MCF 10A (cell line): ENCODE measurements at regions of chr2 and their contacts with region 1.

Region 1: DNA sequence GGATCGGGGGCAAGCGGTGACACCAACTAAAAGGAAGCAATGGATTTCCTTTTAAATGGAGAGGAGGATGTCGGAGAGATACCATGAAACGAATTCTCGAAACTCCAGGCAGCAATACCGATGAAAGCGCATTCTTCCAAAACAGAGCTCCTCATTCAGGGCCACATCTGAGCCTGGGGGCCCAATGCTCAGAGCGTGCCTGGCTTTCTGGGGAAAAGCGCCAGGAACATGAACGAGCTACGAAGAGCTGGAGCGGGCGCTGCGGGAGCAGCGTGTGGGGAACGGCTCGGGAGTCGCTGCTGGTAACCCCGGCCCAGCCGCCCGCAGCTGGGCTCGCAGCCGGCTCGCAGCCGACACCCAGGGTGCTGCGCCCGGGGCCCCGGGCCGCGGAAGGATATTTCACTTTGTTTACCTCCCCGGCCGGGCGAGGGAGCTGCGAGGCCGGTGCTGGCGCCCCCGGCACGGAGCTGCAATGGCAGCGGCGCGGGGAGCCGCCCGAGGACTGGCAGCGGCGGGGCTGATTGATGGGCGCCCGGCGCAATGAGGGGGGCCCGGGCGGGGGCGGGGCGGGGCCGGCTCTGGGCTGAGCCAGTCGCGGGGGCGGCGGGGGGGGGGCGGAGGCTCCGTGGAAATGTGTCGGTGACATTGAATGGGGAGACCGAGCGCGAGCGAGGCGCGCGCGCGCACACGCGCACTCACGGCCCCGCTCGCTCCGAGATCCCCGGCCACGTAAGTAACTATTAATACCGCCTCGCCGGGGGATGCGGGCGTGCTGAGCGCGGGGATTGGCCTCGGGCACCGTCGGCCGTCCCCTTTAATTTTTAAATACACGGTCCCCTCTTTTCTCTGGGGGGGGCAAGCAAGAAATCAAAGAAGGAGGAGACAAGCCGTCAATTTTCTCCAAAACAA is at the start of gene TRIB2:
- DNase-seq: peak; percentile 82
- H3K4me3 Mint-ChIP-seq: peak within 1 kb of the TSS; percentile 95
- H3K27ac Mint-ChIP-seq: peak within 1 kb of the TSS; percentile 85
- H3K4me1 Mint-ChIP-seq: peaks cover 47% of the 10 kb centered on the region
- H3K27me3 Mint-ChIP-seq: no peaks in the 10 kb centered on the region
- CTCF ChIP-seq: no peak
- total RNA-seq, gene TRIB2: 12.9 and 14.3 TPM in 2 replicates

Region 2: GRCh38 chr2:11955314-11955713 is 761.2 kb before region 1 on chr2:
- CTCF ChIA-PET with region 1: interaction called, 3 read pairs
- POLR2A ChIA-PET with region 1: interaction called, 3 read pairs
- intact Hi-C with region 1: loop called (anchors 5 kb)
- DNase-seq: peak; percentile 86
- H3K4me3 Mint-ChIP-seq: no peak overlapping the region
- H3K27ac Mint-ChIP-seq: peak overlapping the region; percentile 47
- H3K4me1 Mint-ChIP-seq: peaks cover 28% of the 10 kb centered on the region
- H3K27me3 Mint-ChIP-seq: no peaks in the 10 kb centered on the region
- CTCF ChIP-seq: no peak

Region 3: GRCh38 chr2:12169721-12170120 is 546.8 kb before region 1 on chr2:
- CTCF ChIA-PET with region 1: interaction called, 4 read pairs
- POLR2A ChIA-PET with region 1: no interaction called
- intact Hi-C with region 1: loop called (anchors 1 kb)
- DNase-seq: no peak
- H3K4me3 Mint-ChIP-seq: no peak overlapping the region
- H3K27ac Mint-ChIP-seq: no peak overlapping the region
- H3K4me1 Mint-ChIP-seq: no peaks in the 10 kb centered on the region
- H3K27me3 Mint-ChIP-seq: no peaks in the 10 kb centered on the region
- CTCF ChIP-seq: no peak

Region 4: GRCh38 chr2:12433628-12433994 is 282.9 kb before region 1 on chr2:
- CTCF ChIA-PET with region 1: interaction called, 4 read pairs
- POLR2A ChIA-PET with region 1: interaction called, 6 read pairs
- intact Hi-C with region 1: loop called (anchors 2 kb)
- DNase-seq: peak; percentile 35
- H3K4me3 Mint-ChIP-seq: no peak overlapping the region
- H3K27ac Mint-ChIP-seq: no peak overlapping the region
- H3K4me1 Mint-ChIP-seq: peaks cover 15% of the 10 kb centered on the region
- H3K27me3 Mint-ChIP-seq: no peaks in the 10 kb centered on the region
- CTCF ChIP-seq: no peak

Region 5: GRCh38 chr2:12587729-12588522 is 128.6 kb before region 1 on chr2:
- CTCF ChIA-PET with region 1: interaction called, 5 read pairs
- POLR2A ChIA-PET with region 1: no interaction called
- intact Hi-C with region 1: loop called (anchors 10 kb)
- DNase-seq: peak; percentile 90
- H3K4me3 Mint-ChIP-seq: peak overlapping the region; percentile 31
- H3K27ac Mint-ChIP-seq: peak overlapping the region; percentile 61
- H3K4me1 Mint-ChIP-seq: peaks cover 10% of the 10 kb centered on the region
- H3K27me3 Mint-ChIP-seq: no peaks in the 10 kb centered on the region
- CTCF ChIP-seq: no peak

Region 6: GRCh38 chr2:13006829-13007717 is 290.5 kb after region 1 on chr2:
- CTCF ChIA-PET with region 1: interaction called, 37 read pairs
- POLR2A ChIA-PET with region 1: interaction called, 4 read pairs
- intact Hi-C with region 1: loop called (anchors 1 kb)
- DNase-seq: peak; percentile 78
- H3K4me3 Mint-ChIP-seq: no peak overlapping the region
- H3K27ac Mint-ChIP-seq: no peak overlapping the region
- H3K4me1 Mint-ChIP-seq: peaks cover 18% of the 10 kb centered on the region
- H3K27me3 Mint-ChIP-seq: no peaks in the 10 kb centered on the region
- CTCF ChIP-seq: peak; percentile 88

Region 7: GRCh38 chr2:13353083-13353482 is 636.5 kb after region 1 on chr2:
- CTCF ChIA-PET with region 1: no interaction called
- POLR2A ChIA-PET with region 1: no interaction called
- intact Hi-C with region 1: no loop called
- DNase-seq: no peak
- H3K4me3 Mint-ChIP-seq: no peak overlapping the region
- H3K27ac Mint-ChIP-seq: no peak overlapping the region
- H3K4me1 Mint-ChIP-seq: no peaks in the 10 kb centered on the region
- H3K27me3 Mint-ChIP-seq: no peaks in the 10 kb centered on the region
- CTCF ChIP-seq: no peak